Activated CD4-positive, alpha-beta T cell treated with anti-CD3 and anti-CD28 coated beads for 36 hours (primary cell): ENCODE measurements at regions of chr17 and their contacts with region 1.

Region 1: GRCh38 chr17:7484067-7484918 is at the start of gene POLR2A:
- DNase-seq: peak; percentile 98
- ATAC-seq: peak; percentile 71
- H3K4me3 Mint-ChIP-seq: peak within 1 kb of the TSS; percentile 99
- H3K27ac Mint-ChIP-seq: peak within 1 kb of the TSS; percentile 100
- H3K4me1 Mint-ChIP-seq: peaks cover 71% of the 10 kb centered on the region
- H3K27me3 Mint-ChIP-seq: no peaks in the 10 kb centered on the region
- total RNA-seq, gene POLR2A: 193 to 203 TPM

Region 2: GRCh38 chr17:7239091-7240027 is 244.9 kb before region 1 on chr17 and contains the start of gene PHF23:
- CTCF ChIA-PET with region 1: no interaction called
- POLR2A ChIA-PET with region 1: interaction called, 4 read pairs
- intact Hi-C with region 1: loop called in 1 of 2 experiments (anchors 1 kb)
- DNase-seq: peak; percentile 99
- ATAC-seq: peak; percentile 74
- H3K4me3 Mint-ChIP-seq: peak within 1 kb of the TSS; percentile 97
- H3K27ac Mint-ChIP-seq: peak within 1 kb of the TSS; percentile 93
- H3K4me1 Mint-ChIP-seq: peaks cover 61% of the 10 kb centered on the region
- H3K27me3 Mint-ChIP-seq: no peaks in the 10 kb centered on the region
- total RNA-seq, gene PHF23: 23.6 to 35.2 TPM

Region 3: DNA sequence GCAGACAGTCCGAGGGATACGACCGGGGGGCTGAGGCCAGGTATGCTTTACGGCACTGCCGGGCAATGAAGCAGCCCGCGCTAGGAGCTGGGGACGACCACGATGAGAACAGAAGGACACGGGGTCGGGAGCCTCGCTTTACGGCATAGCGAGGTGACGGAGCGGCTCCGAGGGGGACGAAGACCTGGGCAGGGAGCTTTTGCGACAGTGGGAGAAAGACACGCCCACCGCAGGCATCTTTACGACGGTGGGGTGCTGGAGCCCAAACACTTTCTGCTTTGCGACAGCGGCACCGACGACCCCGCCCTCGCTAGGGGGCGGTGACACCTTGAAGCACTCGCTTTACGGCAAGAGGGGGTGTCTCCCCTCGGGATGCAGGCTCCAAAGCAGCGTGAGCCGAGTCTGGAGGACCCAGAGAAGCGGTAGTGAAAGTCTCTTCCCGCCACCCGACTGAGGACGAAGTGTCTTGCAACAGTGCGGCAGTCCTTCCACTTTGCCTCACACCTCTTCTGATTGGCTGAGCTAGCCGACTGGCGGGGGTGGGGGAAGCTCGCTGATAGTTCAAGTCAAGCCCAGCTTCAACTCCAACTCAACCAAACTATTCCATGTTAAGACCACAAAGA is 154.8 kb before region 1 on chr17:
- CTCF ChIA-PET with region 1: interaction called, 3 read pairs
- POLR2A ChIA-PET with region 1: interaction called, 5 read pairs
- intact Hi-C with region 1: loop called in 1 of 2 experiments (anchors 1 kb)
- DNase-seq: peak; percentile 98
- ATAC-seq: peak; percentile 69
- H3K4me3 Mint-ChIP-seq: peak overlapping the region; percentile 89
- H3K27ac Mint-ChIP-seq: peak overlapping the region; percentile 96
- H3K4me1 Mint-ChIP-seq: peaks cover 44% of the 10 kb centered on the region
- H3K27me3 Mint-ChIP-seq: no peaks in the 10 kb centered on the region

Region 4: GRCh38 chr17:7454980-7455379 is 29.3 kb before region 1 on chr17:
- CTCF ChIA-PET with region 1: interaction called, 7 read pairs
- POLR2A ChIA-PET with region 1: interaction called, 6 read pairs
- intact Hi-C with region 1: loop called (anchors 1 kb)
- DNase-seq: no peak
- ATAC-seq: no peak
- H3K4me3 Mint-ChIP-seq: peak overlapping the region; percentile 96
- H3K27ac Mint-ChIP-seq: peak overlapping the region; percentile 93
- H3K4me1 Mint-ChIP-seq: peaks cover 19% of the 10 kb centered on the region
- H3K27me3 Mint-ChIP-seq: no peaks in the 10 kb centered on the region

Region 5: GRCh38 chr17:7572588-7573323 is 88.5 kb after region 1 on chr17:
- CTCF ChIA-PET with region 1: no interaction called
- POLR2A ChIA-PET with region 1: no interaction called
- intact Hi-C with region 1: loop called (anchors 1 kb)
- DNase-seq: peak; percentile 100
- ATAC-seq: peak; percentile 92
- H3K4me3 Mint-ChIP-seq: peak overlapping the region; percentile 94
- H3K27ac Mint-ChIP-seq: peak overlapping the region; percentile 99
- H3K4me1 Mint-ChIP-seq: peaks cover 51% of the 10 kb centered on the region
- H3K27me3 Mint-ChIP-seq: no peaks in the 10 kb centered on the region

Region 6: DNA sequence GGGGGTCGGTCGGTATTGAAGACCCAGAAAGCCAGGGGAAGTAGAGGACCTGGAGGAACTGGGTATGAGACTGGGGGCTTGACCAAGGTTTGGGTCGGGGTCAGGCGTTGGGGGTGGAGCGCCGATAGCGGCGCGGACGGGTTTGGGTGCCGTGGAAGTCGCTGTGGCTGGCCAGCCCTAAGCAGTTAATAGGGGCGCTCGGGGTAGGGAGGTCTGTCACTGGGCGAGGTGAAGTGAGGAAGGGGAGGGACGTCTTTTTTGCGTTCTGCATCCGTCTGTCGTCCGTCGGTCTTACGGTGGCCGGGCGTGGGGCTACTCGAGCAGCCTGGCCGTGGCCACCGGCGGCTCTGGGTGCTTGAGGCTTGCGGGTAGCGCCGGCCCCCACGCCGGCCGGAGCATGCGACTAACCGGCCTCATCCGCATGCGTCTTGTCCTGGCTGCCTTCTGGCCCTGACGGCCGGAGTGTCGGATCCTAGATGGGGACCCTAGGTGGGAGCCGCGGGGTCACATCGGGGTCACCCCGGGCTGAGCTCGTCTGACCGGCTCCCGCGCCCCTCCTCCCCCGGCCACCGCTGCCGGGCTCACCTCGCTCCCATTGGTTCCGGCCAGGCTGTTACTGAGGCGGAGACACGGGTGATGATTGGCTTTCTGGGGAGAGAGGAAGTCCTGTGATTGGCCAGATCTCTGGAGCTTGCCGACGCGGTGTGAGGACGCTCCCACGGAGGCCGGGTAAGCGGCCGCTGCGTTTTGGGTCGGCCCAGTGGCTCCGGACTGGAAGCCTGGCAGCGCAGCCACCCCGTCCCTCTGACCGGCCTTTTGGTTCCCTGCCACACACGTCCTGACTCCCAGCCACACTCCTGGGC is 360.2 kb after region 1 on chr17:
- CTCF ChIA-PET with region 1: interaction called, 3 read pairs
- POLR2A ChIA-PET with region 1: no interaction called
- intact Hi-C with region 1: loop called (anchors 1 to 10 kb)
- DNase-seq: peak; percentile 92
- ATAC-seq: peak; percentile 51
- H3K4me3 Mint-ChIP-seq: peak overlapping the region; percentile 97
- H3K27ac Mint-ChIP-seq: peak overlapping the region; percentile 96
- H3K4me1 Mint-ChIP-seq: peaks cover 40% of the 10 kb centered on the region
- H3K27me3 Mint-ChIP-seq: no peaks in the 10 kb centered on the region